Endothelial cell of umbilical vein (primary cell): ENCODE measurements at regions of chr6 and their contacts with region 1.

Region 1: DNA sequence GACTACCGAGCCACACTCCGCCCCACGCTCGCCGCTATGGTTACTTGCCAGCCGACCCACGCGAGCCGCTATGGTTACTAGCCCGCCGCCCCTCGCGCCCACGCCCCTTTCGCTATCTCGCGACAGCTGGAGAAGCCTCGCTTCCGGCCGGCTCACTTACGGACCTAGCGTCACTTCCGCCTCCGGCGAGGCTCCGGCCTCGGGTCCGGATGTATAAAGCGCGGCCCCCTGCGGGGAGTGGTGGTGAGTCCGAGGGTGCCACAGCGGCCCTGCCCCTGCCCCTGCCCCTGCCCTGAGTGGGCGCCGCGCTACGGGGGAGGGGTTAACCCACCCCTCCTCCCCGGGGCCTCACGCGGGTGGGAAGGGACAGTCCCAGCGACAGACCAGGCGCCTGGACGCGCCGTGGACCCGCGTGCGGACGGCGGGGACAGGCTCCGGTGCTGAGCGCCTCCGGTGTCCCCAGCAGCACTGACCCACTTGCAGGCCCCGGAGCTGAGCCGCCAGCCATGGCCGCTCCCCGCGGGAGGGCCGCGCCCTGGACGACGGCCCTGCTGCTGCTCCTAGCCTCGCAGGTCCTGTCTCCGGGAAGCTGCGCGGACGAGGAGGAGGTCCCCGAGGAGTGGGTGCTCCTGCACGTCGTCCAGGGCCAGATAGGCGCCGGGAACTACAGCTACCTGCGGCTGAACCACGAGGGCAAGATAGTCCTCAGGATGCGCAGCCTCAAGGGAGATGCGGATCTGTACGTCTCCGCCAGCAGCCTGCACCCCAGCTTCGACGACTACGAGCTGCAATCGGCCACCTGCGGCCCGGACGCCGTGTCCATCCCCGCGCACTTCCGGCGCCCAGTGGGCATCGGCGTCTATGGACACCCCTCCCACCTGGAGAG is at the starts of genes C6orf120 and WDR27:
- DNase-seq: peak; percentile 97
- H3K4me3 ChIP-seq: peak within 1 kb of the TSS; percentile 70 to 84 (median 71)
- H3K27ac ChIP-seq: peak within 1 kb of the TSS; percentile 76
- H3K4me1 ChIP-seq: peaks cover 57% of the 10 kb centered on the region
- H3K27me3 ChIP-seq: no peaks in the 10 kb centered on the region
- CTCF ChIP-seq: no peak
- POLR2A ChIP-seq: peak; percentile 78
- total RNA-seq, gene C6orf120: 28.2 and 30.1 TPM in 2 replicates
- total RNA-seq, gene WDR27: 69.7 and 75.2 TPM in 2 replicates

Region 2: GRCh38 chr6:168895102-168895812 is 806.9 kb before region 1 on chr6:
- CTCF ChIA-PET with region 1: no interaction called
- POLR2A ChIA-PET with region 1: no interaction called
- dilution Hi-C with region 1: no loop called
- intact Hi-C with region 1: loop called (anchors 2 kb)
- DNase-seq: peak; percentile 44
- H3K4me3 ChIP-seq: no peak overlapping the region
- H3K27ac ChIP-seq: no peak overlapping the region
- H3K4me1 ChIP-seq: no peaks in the 10 kb centered on the region
- H3K27me3 ChIP-seq: no peaks in the 10 kb centered on the region
- CTCF ChIP-seq: peak; percentile 88
- POLR2A ChIP-seq: no peak

Region 3: DNA sequence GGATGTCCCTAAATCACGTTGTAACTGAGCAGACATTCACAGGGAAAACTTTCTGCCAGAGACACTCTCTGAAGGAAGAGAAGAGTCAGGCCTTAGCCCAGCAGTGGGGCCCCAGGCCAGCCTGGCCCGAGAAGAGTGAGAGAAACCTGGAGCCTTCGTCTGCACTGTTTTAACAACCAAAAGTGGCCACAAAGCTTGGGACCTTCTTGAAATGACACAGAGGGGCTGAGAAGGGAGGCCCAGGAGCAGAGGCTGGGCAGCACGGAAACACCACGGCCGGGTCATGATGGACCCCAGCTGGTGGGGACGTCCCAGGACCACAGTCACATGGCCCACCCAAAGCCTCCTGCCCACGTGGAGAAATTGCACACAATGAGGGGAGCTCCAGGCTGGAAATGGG is 321.7 kb before region 1 on chr6:
- CTCF ChIA-PET with region 1: no interaction called
- POLR2A ChIA-PET with region 1: no interaction called
- dilution Hi-C with region 1: no loop called
- intact Hi-C with region 1: no loop called
- DNase-seq: no peak
- H3K4me3 ChIP-seq: no peak overlapping the region
- H3K27ac ChIP-seq: no peak overlapping the region
- H3K4me1 ChIP-seq: no peaks in the 10 kb centered on the region
- H3K27me3 ChIP-seq: no peaks in the 10 kb centered on the region
- CTCF ChIP-seq: no peak
- POLR2A ChIP-seq: no peak

Region 4: DNA sequence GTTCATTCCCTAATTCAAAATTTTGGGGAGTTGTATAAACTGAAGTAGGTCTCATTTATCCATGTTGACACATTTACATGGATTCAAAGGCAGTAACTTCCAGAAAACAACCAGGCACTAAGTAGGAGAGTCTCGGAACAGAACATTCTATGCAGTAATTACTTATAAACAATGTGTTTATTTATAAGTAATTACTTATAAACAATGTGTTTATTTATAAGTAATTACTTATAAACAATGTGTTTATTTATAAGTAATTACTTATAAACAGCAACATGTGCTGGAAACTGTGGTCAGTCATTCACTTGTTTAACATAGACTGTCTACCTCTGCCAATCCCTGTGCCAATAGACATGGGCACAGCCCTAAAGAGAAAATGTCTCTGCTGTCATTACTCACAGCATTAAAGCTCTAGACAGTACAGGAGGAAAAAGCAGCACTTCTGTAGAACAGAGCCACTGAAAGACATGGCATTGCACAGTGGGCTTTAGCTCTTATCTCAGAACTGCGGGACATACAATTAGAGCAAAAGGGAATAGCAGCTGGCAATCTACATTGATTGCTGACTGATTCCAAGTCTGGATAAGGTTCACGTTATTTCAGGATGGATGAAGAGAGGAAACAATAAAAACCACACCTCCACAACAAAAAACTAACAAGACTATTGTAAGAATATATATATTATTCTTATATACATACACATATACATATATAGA is 188.6 kb before region 1 on chr6:
- CTCF ChIA-PET with region 1: interaction called, 11 read pairs
- POLR2A ChIA-PET with region 1: no interaction called
- dilution Hi-C with region 1: no loop called
- intact Hi-C with region 1: no loop called
- DNase-seq: no peak
- H3K4me3 ChIP-seq: no peak overlapping the region
- H3K27ac ChIP-seq: no peak overlapping the region
- H3K4me1 ChIP-seq: no peaks in the 10 kb centered on the region
- H3K27me3 ChIP-seq: no peaks in the 10 kb centered on the region
- CTCF ChIP-seq: no peak
- POLR2A ChIP-seq: no peak

Region 5: GRCh38 chr6:169669889-169670288 is 32.3 kb before region 1 on chr6:
- CTCF ChIA-PET with region 1: interaction called, 3 read pairs
- POLR2A ChIA-PET with region 1: interaction called, 6 read pairs
- dilution Hi-C with region 1: no loop called
- intact Hi-C with region 1: loop called (anchors 1 kb)
- DNase-seq: peak; percentile 98
- H3K4me3 ChIP-seq: no peak overlapping the region
- H3K27ac ChIP-seq: peak overlapping the region; percentile 98
- H3K4me1 ChIP-seq: peaks cover 26% of the 10 kb centered on the region
- H3K27me3 ChIP-seq: no peaks in the 10 kb centered on the region
- CTCF ChIP-seq: no peak
- POLR2A ChIP-seq: no peak

Region 6: DNA sequence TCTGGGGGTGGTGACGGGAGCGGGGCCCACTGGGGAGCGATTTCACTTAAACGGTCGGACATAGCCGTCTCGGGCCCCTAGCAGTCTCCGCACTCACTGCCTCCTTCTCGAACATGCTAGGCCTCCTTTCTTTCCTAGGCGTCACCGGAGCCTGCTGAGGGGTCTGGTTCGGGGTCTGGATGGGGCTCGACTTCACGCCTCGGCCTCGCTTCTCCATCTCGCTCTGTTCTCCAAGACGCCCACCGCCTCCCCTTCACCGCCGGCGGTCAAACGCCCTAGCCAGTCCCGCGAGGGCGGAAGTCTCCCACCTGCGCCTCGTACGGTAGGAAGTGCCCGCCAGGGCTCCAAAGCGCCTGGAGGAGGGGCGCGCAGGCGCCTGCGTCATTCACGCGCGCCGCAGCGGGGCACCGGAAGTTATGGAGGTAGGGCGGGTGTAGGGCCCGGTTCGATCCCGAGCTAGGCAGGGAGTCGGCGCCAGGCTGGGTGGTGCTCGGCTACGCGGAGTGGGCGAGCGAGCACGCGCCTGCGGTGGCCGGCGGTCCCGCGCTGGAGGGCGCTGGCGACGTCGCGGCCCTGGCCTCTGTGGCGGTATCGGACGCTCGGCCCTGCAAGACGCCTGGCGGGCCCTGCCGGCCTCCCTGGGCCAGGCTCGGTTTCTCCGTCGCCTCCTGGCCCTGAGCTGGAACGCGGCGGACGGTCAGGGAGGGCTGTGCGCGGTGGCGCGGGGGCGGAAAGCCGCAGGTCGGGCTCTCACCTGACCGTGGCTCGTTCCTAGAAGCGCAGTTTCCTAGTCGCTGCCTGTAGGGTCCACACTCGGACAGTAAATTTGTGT is 49.3 kb after region 1 on chr6 and contains the starts of genes DYNLT2 and ERMARD:
- CTCF ChIA-PET with region 1: no interaction called
- POLR2A ChIA-PET with region 1: interaction called, 3 read pairs
- dilution Hi-C with region 1: no loop called
- intact Hi-C with region 1: loop called (anchors 1 kb)
- DNase-seq: peak; percentile 96
- H3K4me3 ChIP-seq: peak within 1 kb of the TSS; percentile 62 to 95 (median 92)
- H3K27ac ChIP-seq: peak within 1 kb of the TSS; percentile 83
- H3K4me1 ChIP-seq: peaks cover 14% of the 10 kb centered on the region
- H3K27me3 ChIP-seq: no peaks in the 10 kb centered on the region
- CTCF ChIP-seq: peak in 1 of 2 donors; percentile 23
- POLR2A ChIP-seq: peak; percentile 87
- total RNA-seq, gene DYNLT2: 0.88 and 1.5 TPM in 2 replicates
- total RNA-seq, gene ERMARD: 18.8 and 23.8 TPM in 2 replicates

Region 7: DNA sequence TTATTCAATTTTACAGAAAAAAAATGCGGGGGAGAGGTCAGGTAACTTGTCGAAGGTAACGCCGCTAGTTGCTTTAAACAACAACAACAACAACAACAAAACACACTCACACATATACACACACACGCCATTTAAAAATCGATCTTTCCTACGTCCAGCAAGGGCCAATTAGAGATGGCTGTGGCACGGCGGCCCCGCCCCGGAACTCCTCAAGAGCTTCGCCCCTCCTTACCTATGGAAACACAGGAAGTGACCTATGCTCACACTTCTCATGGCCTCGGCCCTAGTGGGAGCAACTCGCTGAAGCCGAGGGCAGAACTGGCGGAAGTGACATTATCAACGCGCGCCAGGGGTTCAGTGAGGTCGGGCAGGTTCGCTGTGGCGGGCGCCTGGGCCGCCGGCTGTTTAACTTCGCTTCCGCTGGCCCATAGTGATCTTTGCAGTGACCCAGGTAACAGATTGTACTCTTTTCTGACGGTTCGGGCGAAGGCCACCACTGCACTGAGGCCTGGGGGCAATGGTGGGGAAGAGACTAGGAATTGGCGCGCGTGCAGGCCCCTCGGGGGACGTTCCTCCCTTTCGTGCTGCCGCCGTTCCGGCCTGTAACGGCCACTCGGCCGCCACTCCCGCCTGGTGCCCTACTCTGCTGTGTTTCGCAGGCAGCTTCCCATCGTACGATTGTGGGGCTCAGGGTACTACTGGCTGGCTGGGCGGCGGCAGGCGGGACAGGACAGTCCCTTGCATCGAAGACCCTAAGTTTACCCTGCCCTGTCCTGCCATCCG is 852.0 kb after region 1 on chr6 and contains the start of gene TBP:
- CTCF ChIA-PET with region 1: no interaction called
- POLR2A ChIA-PET with region 1: no interaction called
- dilution Hi-C with region 1: no loop called
- intact Hi-C with region 1: loop called (anchors 2 kb)
- DNase-seq: peak; percentile 97
- H3K4me3 ChIP-seq: peak within 1 kb of the TSS; percentile 76 to 89 (median 81)
- H3K27ac ChIP-seq: peak within 1 kb of the TSS; percentile 84
- H3K4me1 ChIP-seq: peaks cover 22% of the 10 kb centered on the region
- H3K27me3 ChIP-seq: no peaks in the 10 kb centered on the region
- CTCF ChIP-seq: no peak
- POLR2A ChIP-seq: peak; percentile 86
- total RNA-seq, gene TBP: 15.3 and 17.7 TPM in 2 replicates